CD4-positive, alpha-beta memory T cell (primary cell): ENCODE measurements at regions of chr2 and their contacts with region 1.

Region 1: GRCh38 chr2:196263181-196263747 is 91.9 kb upstream of the STK17B start:
- DNase-seq: peak; percentile 72 to 82 (median 78)
- H3K4me3 ChIP-seq: peak overlapping the region in 1 of 2 donors; percentile 33
- H3K4me3 Mint-ChIP-seq: peak overlapping the region; percentile 63 to 91 (median 79)
- H3K27ac ChIP-seq: peak overlapping the region; percentile 78
- H3K27ac Mint-ChIP-seq: peak overlapping the region; percentile 85 to 99 (median 97)
- H3K4me1 ChIP-seq: peaks cover 93% of the 10 kb centered on the region
- H3K4me1 Mint-ChIP-seq: peaks cover 59 to 83% (median 71%) of the 10 kb centered on the region in 4 donors
- H3K27me3 ChIP-seq: no peaks in the 10 kb centered on the region
- H3K27me3 Mint-ChIP-seq: no peaks in the 10 kb centered on the region

Region 2: DNA sequence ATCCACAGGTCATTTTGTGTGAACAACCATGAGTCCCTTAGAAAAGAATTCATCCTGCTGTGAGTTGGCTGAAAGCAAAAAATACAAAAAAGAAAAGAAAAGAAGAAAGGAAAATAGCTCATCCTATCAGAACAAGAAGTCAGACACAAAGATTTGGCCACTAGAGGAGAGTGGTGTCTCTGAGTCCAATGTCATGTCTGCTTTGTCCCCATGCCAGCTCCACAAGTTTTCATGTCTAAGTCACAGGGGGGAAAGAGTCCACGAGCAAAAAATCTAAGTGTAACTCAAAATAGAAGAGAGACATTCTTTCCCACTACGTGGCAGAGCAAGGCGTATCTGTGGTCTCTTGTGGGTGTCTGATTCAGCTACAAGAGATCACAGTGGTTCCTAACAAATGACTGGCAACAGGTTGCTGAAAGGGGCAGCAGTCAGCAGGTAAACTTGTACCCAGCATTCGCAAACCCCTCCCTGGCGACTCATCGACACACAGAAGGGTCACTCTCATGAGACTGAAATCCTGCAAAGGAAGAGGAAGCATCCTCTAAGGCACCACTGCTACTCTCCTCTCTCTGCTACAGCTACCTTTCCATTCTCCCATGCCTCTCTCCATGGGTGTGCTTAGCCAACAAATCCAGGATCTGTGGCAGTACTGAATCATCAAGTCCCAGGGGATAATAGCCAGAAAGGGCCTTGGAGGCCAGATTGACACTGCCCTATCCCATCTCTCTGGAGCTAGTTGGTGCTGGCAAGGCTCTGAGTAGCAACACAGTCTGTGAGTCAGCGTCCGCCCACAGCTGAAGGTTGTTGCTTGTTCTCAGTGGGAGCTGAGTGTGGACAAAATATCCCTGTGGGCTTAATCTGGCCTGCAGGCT is 729.3 kb before region 1 on chr2:
- CTCF ChIA-PET with region 1: no interaction called
- POLR2A ChIA-PET with region 1: no interaction called
- intact Hi-C with region 1: loop called (anchors 10 kb)
- DNase-seq: peak in 4 of 5 donors; percentile 42 to 77 (median 49)
- H3K4me3 ChIP-seq: peak overlapping the region; percentile 59 to 70
- H3K4me3 Mint-ChIP-seq: peak overlapping the region; percentile 81 to 92 (median 86)
- H3K27ac ChIP-seq: peak overlapping the region; percentile 55
- H3K27ac Mint-ChIP-seq: peak overlapping the region; percentile 93 to 98 (median 96)
- H3K4me1 ChIP-seq: peaks cover 83% of the 10 kb centered on the region
- H3K4me1 Mint-ChIP-seq: peaks cover 69 to 91% (median 78%) of the 10 kb centered on the region in 4 donors
- H3K27me3 ChIP-seq: no peaks in the 10 kb centered on the region
- H3K27me3 Mint-ChIP-seq: no peaks in the 10 kb centered on the region

Region 3: GRCh38 chr2:195559431-195559914 is 703.8 kb before region 1 on chr2:
- CTCF ChIA-PET with region 1: no interaction called
- POLR2A ChIA-PET with region 1: no interaction called
- intact Hi-C with region 1: loop called (anchors 5 kb)
- DNase-seq: peak; percentile 87 to 90 (median 89)
- H3K4me3 ChIP-seq: no peak overlapping the region
- H3K4me3 Mint-ChIP-seq: peak overlapping the region; percentile 49 to 85 (median 70)
- H3K27ac ChIP-seq: peak overlapping the region; percentile 31
- H3K27ac Mint-ChIP-seq: peak overlapping the region; percentile 82 to 97 (median 92)
- H3K4me1 ChIP-seq: peaks cover 86% of the 10 kb centered on the region
- H3K4me1 Mint-ChIP-seq: peaks cover 49 to 74% (median 58%) of the 10 kb centered on the region in 4 donors
- H3K27me3 ChIP-seq: no peaks in the 10 kb centered on the region
- H3K27me3 Mint-ChIP-seq: no peaks in the 10 kb centered on the region

Region 4: GRCh38 chr2:196205881-196206435 is 57.3 kb before region 1 on chr2:
- CTCF ChIA-PET with region 1: interaction called, 5 read pairs
- POLR2A ChIA-PET with region 1: interaction called, 15 read pairs
- intact Hi-C with region 1: loop called (anchors 1 kb)
- DNase-seq: no peak
- H3K4me3 ChIP-seq: no peak overlapping the region
- H3K4me3 Mint-ChIP-seq: no peak overlapping the region
- H3K27ac ChIP-seq: no peak overlapping the region
- H3K27ac Mint-ChIP-seq: peak overlapping the region in 3 of 7 donors; percentile 14 to 85 (median 24)
- H3K4me1 ChIP-seq: peaks cover 53% of the 10 kb centered on the region
- H3K4me1 Mint-ChIP-seq: peaks cover 46 to 55% (median 49%) of the 10 kb centered on the region in 4 donors
- H3K27me3 ChIP-seq: no peaks in the 10 kb centered on the region
- H3K27me3 Mint-ChIP-seq: no peaks in the 10 kb centered on the region

Region 5: DNA sequence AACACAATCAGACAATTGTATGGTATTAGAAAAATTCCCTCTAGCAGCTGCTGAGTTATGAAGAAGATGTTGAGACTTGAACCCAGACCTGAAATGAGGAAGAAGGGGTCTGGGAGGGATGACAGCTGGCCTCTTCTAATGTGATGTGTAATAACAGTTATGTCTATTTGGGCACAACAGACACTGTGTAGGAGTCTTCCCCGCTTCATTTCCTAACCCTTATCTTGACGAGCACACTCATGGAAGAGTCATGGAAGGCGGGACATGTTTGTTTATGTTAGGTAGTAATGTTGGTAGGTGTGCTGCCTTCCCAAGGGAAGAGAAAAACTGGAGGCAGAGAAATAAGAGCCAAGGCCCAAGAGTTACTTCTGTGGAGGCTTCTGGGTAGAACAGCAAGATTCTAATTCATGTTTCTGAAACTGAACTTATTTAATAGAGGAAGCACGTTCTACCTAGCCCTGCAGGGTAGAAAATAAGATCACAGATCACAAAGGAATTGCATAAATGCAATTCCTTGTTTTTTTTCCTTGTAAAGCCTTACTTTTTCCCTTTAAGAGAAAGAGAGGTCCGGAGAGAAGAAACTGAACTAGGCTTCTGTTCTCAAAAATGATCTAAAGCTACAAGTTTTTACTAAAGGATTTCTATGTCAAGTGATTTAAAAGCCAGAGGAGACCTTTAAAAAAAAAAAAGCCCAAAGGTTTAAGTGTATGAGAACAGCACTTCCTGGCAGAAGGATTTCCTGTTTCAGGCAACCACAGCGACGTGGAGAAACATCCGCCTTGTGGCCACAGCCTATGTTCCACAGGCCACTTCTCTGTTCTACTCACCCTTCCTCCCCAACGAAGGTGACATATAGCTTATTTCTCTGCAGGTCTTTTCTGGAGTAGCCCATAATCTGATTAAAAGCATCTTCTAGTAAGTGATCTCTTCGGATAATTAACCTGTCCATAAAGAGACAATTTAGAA is 23.4 kb before region 1 on chr2:
- CTCF ChIA-PET with region 1: interaction called, 60 read pairs
- POLR2A ChIA-PET with region 1: interaction called, 83 read pairs
- intact Hi-C with region 1: loop called (anchors 1 kb)
- DNase-seq: peak; percentile 84 to 90 (median 87)
- H3K4me3 ChIP-seq: peak overlapping the region in 1 of 2 donors; percentile 44
- H3K4me3 Mint-ChIP-seq: peak overlapping the region; percentile 65 to 82 (median 78)
- H3K27ac ChIP-seq: peak overlapping the region; percentile 56
- H3K27ac Mint-ChIP-seq: peak overlapping the region; percentile 95 to 98 (median 96)
- H3K4me1 ChIP-seq: peaks cover 76% of the 10 kb centered on the region
- H3K4me1 Mint-ChIP-seq: peaks cover 62 to 86% (median 70%) of the 10 kb centered on the region in 4 donors
- H3K27me3 ChIP-seq: no peaks in the 10 kb centered on the region
- H3K27me3 Mint-ChIP-seq: no peaks in the 10 kb centered on the region

Region 6: GRCh38 chr2:196249860-196250259 is 13.4 kb before region 1 on chr2:
- CTCF ChIA-PET with region 1: interaction called, 60 read pairs
- POLR2A ChIA-PET with region 1: interaction called, 24 read pairs
- intact Hi-C with region 1: no loop called
- DNase-seq: no peak
- H3K4me3 ChIP-seq: no peak overlapping the region
- H3K4me3 Mint-ChIP-seq: peak overlapping the region in 3 of 8 donors; percentile 6 to 66 (median 55)
- H3K27ac ChIP-seq: no peak overlapping the region
- H3K27ac Mint-ChIP-seq: peak overlapping the region in 6 of 7 donors; percentile 13 to 82 (median 42)
- H3K4me1 ChIP-seq: peaks cover 39% of the 10 kb centered on the region
- H3K4me1 Mint-ChIP-seq: peaks cover 56 to 78% (median 65%) of the 10 kb centered on the region in 4 donors
- H3K27me3 ChIP-seq: no peaks in the 10 kb centered on the region
- H3K27me3 Mint-ChIP-seq: no peaks in the 10 kb centered on the region

Region 7: GRCh38 chr2:196344397-196344796 is 81.1 kb after region 1 on chr2:
- CTCF ChIA-PET with region 1: no interaction called
- POLR2A ChIA-PET with region 1: no interaction called
- intact Hi-C with region 1: no loop called
- DNase-seq: no peak
- H3K4me3 ChIP-seq: no peak overlapping the region
- H3K4me3 Mint-ChIP-seq: no peak overlapping the region
- H3K27ac ChIP-seq: no peak overlapping the region
- H3K27ac Mint-ChIP-seq: no peak overlapping the region
- H3K4me1 ChIP-seq: no peaks in the 10 kb centered on the region
- H3K4me1 Mint-ChIP-seq: no peaks in the 10 kb centered on the region
- H3K27me3 ChIP-seq: no peaks in the 10 kb centered on the region
- H3K27me3 Mint-ChIP-seq: peaks cover 0 to 2% of the 10 kb centered on the region in 2 donors